Caco-2 (cell line): ENCODE measurements at regions of chr7 and their contacts with region 1.

Region 1: GRCh38 chr7:139570119-139570518 is 46.6 kb downstream of the CLEC2L start:
- DNase-seq: no peak
- H3K4me3 ChIP-seq: no peak overlapping the region
- H3K4me3 Mint-ChIP-seq: no peak overlapping the region
- H3K27ac Mint-ChIP-seq: no peak overlapping the region
- H3K4me1 ChIP-seq: peaks cover 14% of the 10 kb centered on the region
- H3K4me1 Mint-ChIP-seq: peaks cover 23% of the 10 kb centered on the region
- H3K27me3 ChIP-seq: no peaks in the 10 kb centered on the region
- H3K27me3 Mint-ChIP-seq: no peaks in the 10 kb centered on the region
- CTCF ChIP-seq: peak in 1 of 2 experiments; percentile 6

Region 2: GRCh38 chr7:139500770-139501138 is 69.4 kb before region 1 on chr7:
- CTCF ChIA-PET with region 1: interaction called, 8 read pairs
- POLR2A ChIA-PET with region 1: no interaction called
- intact Hi-C with region 1: loop called (anchors 1 kb)
- DNase-seq: no peak
- H3K4me3 ChIP-seq: no peak overlapping the region
- H3K4me3 Mint-ChIP-seq: peak overlapping the region; percentile 72
- H3K27ac Mint-ChIP-seq: no peak overlapping the region
- H3K4me1 ChIP-seq: no peaks in the 10 kb centered on the region; the same call in 1 of the 2 replicates
- H3K4me1 Mint-ChIP-seq: peaks cover 7% of the 10 kb centered on the region
- H3K27me3 ChIP-seq: no peaks in the 10 kb centered on the region
- H3K27me3 Mint-ChIP-seq: no peaks in the 10 kb centered on the region
- CTCF ChIP-seq: no peak

Region 3: GRCh38 chr7:139557857-139558581 is 12.1 kb before region 1 on chr7:
- CTCF ChIA-PET with region 1: no interaction called
- POLR2A ChIA-PET with region 1: no interaction called
- intact Hi-C with region 1: loop called (anchors 1 kb)
- DNase-seq: no peak
- H3K4me3 ChIP-seq: no peak overlapping the region
- H3K4me3 Mint-ChIP-seq: no peak overlapping the region
- H3K27ac Mint-ChIP-seq: no peak overlapping the region
- H3K4me1 ChIP-seq: peaks cover 3% of the 10 kb centered on the region; the same call in 1 of the 2 replicates
- H3K4me1 Mint-ChIP-seq: peaks cover 14% of the 10 kb centered on the region
- H3K27me3 ChIP-seq: no peaks in the 10 kb centered on the region
- H3K27me3 Mint-ChIP-seq: no peaks in the 10 kb centered on the region
- CTCF ChIP-seq: peak in 1 of 2 experiments; percentile 17